A549 (cell line): ENCODE measurements at regions of chr2 and their contacts with region 1.

Region 1: DNA sequence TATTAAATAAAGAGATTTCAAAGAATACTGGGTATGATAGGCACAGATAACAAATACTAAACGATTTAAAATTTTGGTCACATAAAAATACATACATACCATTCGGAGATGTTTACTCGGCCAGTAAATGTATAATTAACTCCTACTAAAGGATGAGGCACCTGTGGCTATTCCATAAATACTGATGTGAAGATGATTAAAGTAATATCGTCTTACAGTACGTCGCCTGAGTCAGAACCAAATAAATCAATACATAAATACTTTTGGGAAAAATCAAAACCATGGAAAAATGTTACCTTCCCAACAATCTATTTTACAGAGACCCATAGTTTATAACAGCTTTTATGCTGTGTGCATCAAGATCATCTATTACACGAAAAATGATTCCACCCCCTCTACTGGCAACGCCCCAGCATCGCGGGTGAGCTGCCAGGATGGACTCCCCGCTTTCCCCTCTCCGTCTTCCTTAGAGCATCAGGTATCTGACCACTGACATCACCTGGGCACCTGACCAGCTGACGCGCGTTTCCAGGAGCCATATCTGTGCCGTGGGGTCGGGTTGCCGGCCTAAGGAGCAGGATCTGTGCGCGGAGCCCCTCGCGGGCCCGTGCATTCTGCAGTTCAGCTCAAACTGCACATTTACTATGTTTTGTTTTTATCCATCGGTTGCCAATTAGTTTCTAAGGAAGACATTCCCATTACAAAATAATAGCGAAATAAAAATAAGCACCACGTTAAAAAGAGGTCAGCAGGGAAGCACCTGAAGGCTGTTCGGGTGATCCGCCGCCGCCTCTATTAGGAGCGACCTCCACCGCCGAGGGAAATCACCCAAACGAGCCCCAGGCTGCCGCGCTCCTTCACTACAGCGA is 901 bp downstream of the ICA1L start:
- DNase-seq: peak; percentile 57 to 83
- ATAC-seq: peak; percentile 88 to 89
- H3K4me3 ChIP-seq: peak overlapping the region; percentile 72
- H3K27ac ChIP-seq: peak overlapping the region; percentile 77 to 94
- H3K4me1 ChIP-seq: peaks cover 6% of the 10 kb centered on the region; the same call in 2 of the 3 replicates
- CTCF ChIP-seq: peak; percentile 56
- EP300 ChIP-seq: no peak
- POLR2A ChIP-seq: peak; percentile 14; the same call in 1 of the 2 replicates
- RAD21 ChIP-seq: peak; percentile 55 to 58; a peak in 4 of 5 replicates

Region 2: DNA sequence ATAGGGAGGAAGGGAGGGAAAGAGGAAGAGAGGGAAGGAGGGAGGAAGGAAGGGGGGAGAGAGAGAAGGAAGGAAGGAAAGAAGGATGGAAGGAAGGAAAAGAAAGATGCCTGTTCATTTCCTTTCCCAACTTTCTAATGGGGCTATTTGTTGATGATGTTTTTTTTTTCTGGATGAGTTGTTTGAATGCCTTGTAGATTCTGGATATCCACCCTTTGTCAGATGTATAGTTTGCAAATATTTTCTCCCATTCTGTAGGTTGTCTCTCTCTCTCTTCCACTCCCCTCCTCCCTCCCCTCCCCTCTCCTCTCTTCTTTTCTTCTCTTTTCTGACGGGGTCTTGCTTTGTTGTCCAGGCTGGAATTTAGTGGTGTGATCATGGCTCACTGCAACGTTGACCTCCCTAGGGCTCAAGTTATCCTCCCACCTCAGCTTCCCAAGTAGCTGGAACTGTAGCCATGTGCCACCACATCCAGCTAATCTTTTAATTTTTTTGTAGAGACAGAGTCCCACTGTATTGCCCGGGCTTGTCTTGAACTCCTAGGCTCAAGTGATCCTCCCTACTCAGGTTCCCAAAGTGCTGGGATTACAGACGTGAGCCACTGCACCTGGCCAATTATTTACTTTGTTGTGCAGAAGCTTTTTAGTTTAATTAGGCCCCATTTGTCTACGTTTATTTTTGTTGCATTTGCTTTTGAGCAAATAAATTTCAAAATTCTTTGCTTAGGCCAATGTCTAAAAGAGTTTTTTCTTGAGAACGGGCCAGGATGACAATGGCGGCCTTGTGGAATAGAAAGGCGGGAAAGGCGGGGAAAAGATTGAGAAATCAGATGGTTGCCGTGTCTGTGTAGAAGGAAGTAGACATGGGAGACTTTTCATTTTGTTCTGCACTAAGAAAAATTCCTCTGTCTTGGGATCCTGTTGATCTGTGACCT is 293.1 kb before region 1 on chr2:
- CTCF ChIA-PET with region 1: interaction called, 15 read pairs
- POLR2A ChIA-PET with region 1: no interaction called
- DNase-seq: no peak
- ATAC-seq: no peak
- H3K4me3 ChIP-seq: no peak overlapping the region
- H3K27ac ChIP-seq: no peak overlapping the region
- H3K4me1 ChIP-seq: no peaks in the 10 kb centered on the region
- CTCF ChIP-seq: no peak
- EP300 ChIP-seq: no peak
- POLR2A ChIP-seq: no peak
- RAD21 ChIP-seq: no peak

Region 3: GRCh38 chr2:202634556-202635427 is 235.9 kb before region 1 on chr2 and contains the start of gene FAM117B:
- CTCF ChIA-PET with region 1: interaction called, 5 read pairs
- POLR2A ChIA-PET with region 1: interaction called, 16 read pairs
- DNase-seq: peak; percentile 92 to 96
- ATAC-seq: peak; percentile 92 to 98
- H3K4me3 ChIP-seq: peak within 1 kb of the TSS; percentile 88
- H3K27ac ChIP-seq: peak within 1 kb of the TSS; percentile 93 to 98
- H3K4me1 ChIP-seq: peaks cover 25% of the 10 kb centered on the region; the same call in 2 of the 3 replicates
- CTCF ChIP-seq: no peak
- EP300 ChIP-seq: no peak
- POLR2A ChIP-seq: peak; percentile 53
- RAD21 ChIP-seq: no peak; a peak in 1 of 5 replicates
- polyA plus RNA-seq, gene FAM117B: 3.6 and 4.9 TPM in 2 replicates

Region 4: DNA sequence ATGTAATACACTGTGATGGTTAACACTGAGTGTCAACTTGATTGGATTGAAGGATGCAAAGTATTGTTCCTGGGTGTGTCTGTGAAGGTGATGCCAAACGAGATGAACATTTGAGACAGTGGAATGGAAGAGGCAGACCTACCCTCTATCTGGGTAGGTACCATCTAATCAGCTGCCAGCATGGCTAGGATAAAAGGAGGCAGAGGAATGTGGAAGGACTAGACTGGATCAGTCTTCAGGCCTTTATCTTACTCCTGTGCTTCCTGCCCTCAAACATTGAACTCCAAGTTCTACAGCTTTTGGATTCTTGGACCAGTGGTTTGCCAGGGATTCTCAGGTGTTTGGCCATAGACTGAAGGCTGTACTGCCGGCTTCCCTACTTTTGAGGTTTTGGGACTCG is 31.7 kb after region 1 on chr2:
- CTCF ChIA-PET with region 1: no interaction called
- POLR2A ChIA-PET with region 1: no interaction called
- DNase-seq: no peak
- ATAC-seq: no peak
- H3K4me3 ChIP-seq: no peak overlapping the region
- H3K27ac ChIP-seq: no peak overlapping the region
- H3K4me1 ChIP-seq: no peaks in the 10 kb centered on the region
- CTCF ChIP-seq: no peak
- EP300 ChIP-seq: no peak
- POLR2A ChIP-seq: no peak
- RAD21 ChIP-seq: no peak

Region 5: DNA sequence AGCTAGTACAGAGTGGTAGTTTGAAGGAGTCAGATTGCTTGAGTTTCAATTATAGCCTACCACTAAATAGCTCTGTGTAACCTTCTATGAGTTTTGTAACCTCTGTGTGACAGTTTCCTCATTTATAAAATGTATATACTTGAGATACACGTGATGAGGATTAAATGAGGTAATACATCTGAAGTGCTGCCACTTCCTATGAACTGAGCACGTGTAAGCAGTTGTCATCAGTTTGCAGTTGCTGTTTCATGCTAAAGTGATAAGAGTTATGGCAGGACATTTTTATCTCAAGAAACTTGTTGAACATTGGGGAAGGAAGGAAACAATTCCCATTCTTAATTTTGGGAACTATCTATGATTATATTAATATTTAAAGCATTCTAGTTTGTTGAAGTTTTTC is 79.9 kb after region 1 on chr2:
- CTCF ChIA-PET with region 1: no interaction called
- POLR2A ChIA-PET with region 1: no interaction called
- DNase-seq: no peak
- ATAC-seq: no peak
- H3K4me3 ChIP-seq: no peak overlapping the region
- H3K27ac ChIP-seq: no peak overlapping the region
- H3K4me1 ChIP-seq: no peaks in the 10 kb centered on the region
- CTCF ChIP-seq: no peak
- EP300 ChIP-seq: no peak
- POLR2A ChIP-seq: no peak
- RAD21 ChIP-seq: no peak